ENCODE measurements at regions of chr13 and their contacts with region 1.

Region 1: DNA sequence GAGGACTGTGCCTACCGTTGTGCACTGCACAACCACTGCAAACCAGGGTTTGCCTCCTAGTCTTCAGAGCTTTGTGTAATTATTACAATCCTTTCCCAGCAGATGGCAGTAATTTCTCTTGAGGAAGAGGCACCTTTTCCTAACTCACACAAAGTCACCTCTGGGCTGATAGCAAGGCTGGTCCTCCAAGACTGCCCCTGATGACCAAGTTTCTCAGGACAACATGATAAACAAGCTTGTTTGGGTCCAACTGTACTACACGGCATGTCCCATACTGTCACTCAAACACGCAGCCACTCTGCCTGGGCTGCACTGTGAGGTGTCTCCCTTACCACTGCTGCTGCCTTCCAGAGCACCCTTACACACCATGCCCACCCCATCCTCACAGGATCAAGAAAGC is 39.3 kb downstream of the RFXAP start:
- DNase-seq: no peak
- ATAC-seq: peak; percentile 38 to 80 (median 62)
- H3K4me3 ChIP-seq: no peak overlapping the region
- H3K27ac ChIP-seq: no peak overlapping the region
- H3K4me1 ChIP-seq: peaks cover 0 to 21% (median 2%) of the 10 kb centered on the region in 12 donors
- H3K27me3 ChIP-seq: no peaks in the 10 kb centered on the region
- CTCF ChIP-seq: peak; percentile 19 to 62 (median 48)
- POLR2A ChIP-seq: no peak

Region 2: DNA sequence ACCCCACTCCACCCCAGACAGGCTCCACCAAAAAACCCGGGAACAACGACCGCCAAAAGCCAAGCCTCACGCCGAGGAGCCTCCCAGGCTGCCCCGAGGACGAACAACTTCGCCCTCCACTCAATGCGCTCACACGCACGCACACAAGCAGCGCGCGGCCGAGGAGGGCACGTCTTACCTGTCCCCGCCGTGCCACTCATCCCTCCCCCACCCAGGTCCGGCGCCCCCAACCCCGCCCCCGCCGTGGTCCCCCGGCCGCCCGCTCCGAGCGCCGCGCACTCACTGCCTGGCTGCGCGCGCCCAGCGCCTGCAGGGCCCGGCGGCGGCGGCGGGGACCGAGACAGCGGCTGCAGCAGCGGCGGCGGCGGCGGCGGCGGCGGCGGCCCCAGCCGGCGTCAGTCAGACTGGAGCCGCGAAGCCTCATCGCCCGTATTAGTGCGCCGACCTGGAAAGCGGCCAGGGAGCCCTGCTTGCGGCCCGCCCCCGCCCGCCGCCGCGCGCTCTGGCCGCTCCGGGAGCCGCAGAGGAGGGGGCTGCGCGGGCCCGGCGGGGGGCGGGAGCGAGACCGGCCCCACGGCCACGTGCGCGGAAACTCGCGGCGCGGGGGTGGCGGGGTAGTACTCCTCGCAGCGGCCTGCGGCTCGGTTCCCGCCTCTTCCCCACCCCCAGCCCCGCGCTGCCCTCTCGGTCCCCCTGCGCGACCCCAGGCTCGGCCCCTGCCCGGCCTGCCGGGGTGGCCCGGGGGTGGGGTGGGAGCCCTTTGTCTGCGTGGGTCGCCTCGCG is 61.7 kb after region 1 on chr13 and contains the start of gene SMAD9:
- intact Hi-C with region 1: loop called in 4 of 10 experiments (anchors 2 to 10 kb)
- DNase-seq: peak; percentile 85 to 87 (median 86)
- ATAC-seq: peak; percentile 53 to 85 (median 80)
- H3K4me3 ChIP-seq: peak within 1 kb of the TSS; percentile 49 to 85 (median 68)
- H3K27ac ChIP-seq: peak within 1 kb of the TSS; percentile 48 to 87 (median 62)
- H3K4me1 ChIP-seq: peaks cover 0 to 27% (median 4%) of the 10 kb centered on the region in 12 donors
- H3K27me3 ChIP-seq: peaks cover 0 to 16% (median 0%) of the 10 kb centered on the region in 9 donors
- CTCF ChIP-seq: no peak
- POLR2A ChIP-seq: peak in 1 of 2 donors; percentile 34
- total RNA-seq, gene SMAD9: 2.2 to 10.4 (median 4.9) TPM

Region 3: GRCh38 chr13:36981156-36981743 is 123.0 kb after region 1 on chr13:
- intact Hi-C with region 1: loop called (anchors 1 to 10 kb)
- DNase-seq: no peak
- ATAC-seq: no peak
- H3K4me3 ChIP-seq: no peak overlapping the region
- H3K27ac ChIP-seq: no peak overlapping the region
- H3K4me1 ChIP-seq: peaks cover 0 to 5% (median 0%) of the 10 kb centered on the region in 12 donors
- H3K27me3 ChIP-seq: no peaks in the 10 kb centered on the region
- CTCF ChIP-seq: peak; percentile 26 to 68 (median 51)
- POLR2A ChIP-seq: no peak

Region 4: GRCh38 chr13:37074703-37075102 is 216.4 kb after region 1 on chr13:
- intact Hi-C with region 1: no loop called
- DNase-seq: no peak
- ATAC-seq: peak in 2 of 4 donors; percentile 39 to 55
- H3K4me3 ChIP-seq: no peak overlapping the region
- H3K27ac ChIP-seq: no peak overlapping the region
- H3K4me1 ChIP-seq: no peaks in the 10 kb centered on the region
- H3K27me3 ChIP-seq: no peaks in the 10 kb centered on the region
- CTCF ChIP-seq: peak in 11 of 12 donors; percentile 28 to 60 (median 47)
- POLR2A ChIP-seq: no peak

Measured in heart left ventricle (tissue), 16 donors.